Gastrocnemius medialis (tissue), 4 donors: ENCODE measurements at regions of chr1 and their contacts with region 1.

Region 1: GRCh38 chr1:26787706-26788514 is at the start of gene PIGV:
- DNase-seq: peak; percentile 68 to 81
- ATAC-seq: peak; percentile 81 to 82
- H3K4me3 ChIP-seq: peak within 1 kb of the TSS; percentile 69 to 87 (median 84)
- H3K27ac ChIP-seq: peak within 1 kb of the TSS; percentile 93 to 99 (median 98)
- H3K4me1 ChIP-seq: peaks cover 51 to 67% of the 10 kb centered on the region in 2 donors
- H3K27me3 ChIP-seq: no peaks in the 10 kb centered on the region
- CTCF ChIP-seq: peak; percentile 23 to 40 (median 38)
- POLR2A ChIP-seq: peak; percentile 78 to 84
- total RNA-seq, gene PIGV: 2.9 to 16.0 (median 5.8) TPM

Region 2: GRCh38 chr1:26500488-26501175 is 287.3 kb before region 1 on chr1:
- in situ Hi-C with region 1: no loop called
- intact Hi-C with region 1: loop called (anchors 2 kb)
- DNase-seq: peak; percentile 60 to 68
- ATAC-seq: peak; percentile 79 to 88
- H3K4me3 ChIP-seq: peak overlapping the region; percentile 69 to 91 (median 74)
- H3K27ac ChIP-seq: peak overlapping the region; percentile 78 to 82 (median 81)
- H3K4me1 ChIP-seq: peaks cover 0 to 9% of the 10 kb centered on the region in 2 donors
- H3K27me3 ChIP-seq: no peaks in the 10 kb centered on the region
- CTCF ChIP-seq: peak in 1 of 5 experiments; percentile 28
- POLR2A ChIP-seq: peak in 1 of 2 donors; percentile 47

Region 3: GRCh38 chr1:26677306-26678115 is 110.4 kb before region 1 on chr1:
- in situ Hi-C with region 1: loop called in 1 of 4 experiments (anchors 10 kb)
- intact Hi-C with region 1: loop called (anchors 1 kb)
- DNase-seq: peak; percentile 81 to 91
- ATAC-seq: peak; percentile 100
- H3K4me3 ChIP-seq: peak overlapping the region in 3 of 4 donors; percentile 2 to 38 (median 10)
- H3K27ac ChIP-seq: peak overlapping the region in 3 of 4 donors; percentile 19 to 51 (median 45)
- H3K4me1 ChIP-seq: peaks cover 4 to 9% of the 10 kb centered on the region in 2 donors
- H3K27me3 ChIP-seq: no peaks in the 10 kb centered on the region
- CTCF ChIP-seq: peak; percentile 74 to 88 (median 79)
- POLR2A ChIP-seq: no peak

Region 4: DNA sequence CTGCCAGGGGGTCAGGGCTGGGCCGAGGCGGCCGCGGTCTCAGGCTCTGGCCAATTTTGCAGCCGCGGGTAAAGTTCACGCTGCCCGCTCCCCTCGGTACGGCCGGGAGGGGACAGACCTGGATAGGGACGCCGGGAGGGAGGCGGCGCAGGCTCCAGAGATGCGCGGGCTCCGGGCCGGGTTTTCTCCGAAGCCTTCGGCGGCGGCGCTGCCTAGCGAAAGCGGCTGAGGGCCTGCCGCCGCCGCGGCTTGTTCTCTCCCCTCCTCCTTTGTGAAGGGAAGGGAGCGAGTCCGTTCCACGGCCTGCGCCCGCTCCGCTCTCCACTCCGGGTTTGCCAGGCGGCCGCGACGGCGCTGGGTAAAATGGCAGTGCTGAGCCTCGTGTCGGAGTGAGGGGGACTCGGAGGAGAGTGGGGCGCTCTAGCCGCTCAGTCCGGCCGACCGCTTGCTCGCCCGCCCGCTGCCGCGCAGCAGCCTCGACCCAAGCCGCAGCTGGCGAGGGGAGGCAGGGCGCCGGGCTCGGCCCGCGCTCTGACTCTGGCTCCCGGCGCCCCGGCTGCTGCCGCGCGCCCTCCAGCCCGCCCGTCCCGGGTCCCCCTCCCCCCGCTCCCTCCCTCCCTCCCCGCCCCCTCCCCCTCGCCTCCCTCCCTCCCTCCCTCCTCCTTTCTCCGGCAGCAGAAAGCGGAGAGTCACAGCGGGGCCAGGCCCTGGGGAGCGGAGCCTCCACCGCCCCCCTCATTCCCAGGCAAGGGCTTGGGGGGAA is 92.4 kb before region 1 on chr1 and contains the start of gene ARID1A:
- in situ Hi-C with region 1: loop called (anchors 5 to 10 kb)
- intact Hi-C with region 1: loop called (anchors 1 kb)
- DNase-seq: peak; percentile 90 to 95
- ATAC-seq: peak; percentile 55 to 61
- H3K4me3 ChIP-seq: peak within 1 kb of the TSS; percentile 75 to 89 (median 84)
- H3K27ac ChIP-seq: peak within 1 kb of the TSS; percentile 92 to 95 (median 95)
- H3K4me1 ChIP-seq: peaks cover 49 to 56% of the 10 kb centered on the region in 2 donors
- H3K27me3 ChIP-seq: no peaks in the 10 kb centered on the region
- CTCF ChIP-seq: peak in 4 of 5 experiments; percentile 15 to 68 (median 38)
- POLR2A ChIP-seq: peak; percentile 69 to 77
- total RNA-seq, gene ARID1A: 22.3 to 51.0 (median 35.0) TPM

Region 5: DNA sequence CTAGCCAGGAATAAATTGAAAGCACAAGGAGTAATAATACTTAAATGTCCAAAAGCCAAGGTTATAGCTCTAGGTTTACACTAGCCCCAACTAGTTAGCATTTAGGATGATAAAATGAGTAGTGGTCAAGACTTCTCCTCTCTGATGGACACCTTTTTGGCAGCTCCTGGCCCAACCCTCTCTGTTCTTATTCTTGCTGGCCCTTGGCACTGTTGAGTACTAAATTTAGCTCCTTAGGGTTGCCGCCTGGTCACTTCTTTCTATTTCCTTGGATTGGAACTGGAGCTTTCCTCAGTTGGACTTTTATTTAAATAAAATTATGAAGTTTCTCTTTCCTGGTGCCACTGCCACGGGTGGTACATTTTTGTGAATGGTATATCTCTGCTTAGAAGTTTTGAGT is 63.8 kb before region 1 on chr1:
- in situ Hi-C with region 1: no loop called
- intact Hi-C with region 1: loop called (anchors 2 kb)
- DNase-seq: peak in 1 of 2 donors; percentile 33
- ATAC-seq: peak in 1 of 2 donors; percentile 66
- H3K4me3 ChIP-seq: peak overlapping the region in 3 of 4 donors; percentile 1 to 30 (median 9)
- H3K27ac ChIP-seq: peak overlapping the region in 3 of 4 donors; percentile 56 to 72 (median 57)
- H3K4me1 ChIP-seq: peaks cover 79 to 87% of the 10 kb centered on the region in 2 donors
- H3K27me3 ChIP-seq: no peaks in the 10 kb centered on the region
- CTCF ChIP-seq: no peak
- POLR2A ChIP-seq: no peak

Region 6: DNA sequence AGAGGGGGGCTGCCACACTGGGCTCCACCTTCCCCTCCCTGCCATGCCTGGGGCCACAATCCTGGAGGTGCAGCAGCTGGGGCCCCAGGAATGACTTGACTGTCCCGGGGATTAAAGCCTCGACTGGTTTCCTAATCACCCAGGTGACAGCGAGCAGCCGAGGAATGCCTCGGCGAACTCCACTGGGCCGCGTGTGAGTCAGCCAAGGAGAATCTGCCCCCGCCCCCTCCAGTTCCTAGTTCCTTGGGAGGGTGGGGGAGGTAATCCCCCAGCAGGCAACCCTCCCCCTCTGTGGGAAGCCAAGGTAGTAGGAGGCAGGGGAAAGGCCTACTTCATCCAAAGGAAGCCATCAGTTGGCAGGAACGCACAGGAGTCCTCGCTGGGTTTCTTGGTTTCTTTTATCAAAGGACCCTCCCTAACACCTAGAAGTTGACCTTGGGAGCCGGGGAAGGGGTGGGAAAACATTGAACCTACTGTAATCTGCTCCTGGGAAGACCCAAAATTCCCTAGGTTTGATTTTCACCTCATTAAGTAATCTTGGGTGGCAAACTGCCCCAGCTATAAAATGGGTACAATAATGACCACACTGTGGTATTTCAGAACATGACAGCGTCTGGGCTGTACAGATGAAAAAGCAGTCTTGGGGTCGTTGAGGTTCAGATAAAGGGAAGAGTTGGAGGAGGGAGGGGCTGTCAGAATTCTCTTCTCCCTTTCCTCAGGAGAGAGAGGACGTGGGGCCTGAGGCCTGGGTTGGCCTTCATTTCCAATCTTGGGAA is 223.3 kb after region 1 on chr1:
- in situ Hi-C with region 1: no loop called
- intact Hi-C with region 1: no loop called
- DNase-seq: peak in 1 of 2 donors; percentile 39
- ATAC-seq: no peak
- H3K4me3 ChIP-seq: peak overlapping the region in 2 of 4 donors; percentile 24 to 55
- H3K27ac ChIP-seq: peak overlapping the region; percentile 4 to 72 (median 70)
- H3K4me1 ChIP-seq: peaks cover 5 to 8% of the 10 kb centered on the region in 2 donors
- H3K27me3 ChIP-seq: no peaks in the 10 kb centered on the region
- CTCF ChIP-seq: no peak
- POLR2A ChIP-seq: no peak